Ovary (tissue), 10 donors: ENCODE measurements at regions of chr13 and their contacts with region 1.

Region 1: DNA sequence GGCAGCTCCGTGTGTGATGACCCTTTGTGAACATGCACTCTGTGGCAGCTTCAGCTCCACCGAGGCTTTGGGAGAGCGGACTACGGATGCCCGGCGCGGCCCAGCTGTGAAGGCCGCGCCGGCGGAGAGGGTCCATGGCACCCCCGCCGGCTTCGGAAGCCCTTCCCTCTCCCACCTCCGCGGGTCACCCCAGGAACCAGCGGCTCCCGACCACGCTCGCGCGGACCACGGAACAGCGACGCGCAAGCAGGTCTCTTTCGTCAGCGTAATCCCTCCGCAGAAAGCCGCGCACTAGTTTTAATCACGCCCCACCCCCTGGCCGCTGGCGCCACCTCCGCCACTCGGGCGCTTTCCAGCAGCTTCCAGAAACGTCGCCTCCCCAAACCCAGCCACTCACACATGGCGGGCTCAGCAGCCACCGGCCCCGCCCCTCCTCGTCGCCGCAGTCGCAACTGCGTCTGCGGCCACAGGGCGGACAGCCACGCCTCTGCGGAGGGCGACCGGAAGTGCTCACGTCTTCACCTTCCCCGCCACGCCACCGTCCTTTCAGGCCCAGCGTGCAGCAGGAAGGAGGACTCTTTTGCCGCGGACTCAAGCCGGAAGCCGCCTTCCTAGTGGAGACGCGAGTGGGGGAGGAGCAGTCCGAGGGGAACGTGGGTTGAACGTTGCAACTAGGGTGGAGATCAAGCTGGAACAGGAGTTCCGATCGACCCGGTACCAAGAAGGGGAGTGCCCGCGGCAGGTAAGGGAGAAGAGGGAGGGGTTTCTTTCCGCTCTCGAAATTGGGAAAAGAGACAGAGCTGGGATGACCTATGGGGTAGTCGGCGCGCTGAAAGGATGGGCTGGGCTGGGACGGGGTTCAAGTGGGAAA is at the start of gene USPL1:
- DNase-seq: peak; percentile 96 to 98 (median 98)
- H3K4me3 ChIP-seq: peak within 1 kb of the TSS; percentile 88
- H3K27ac ChIP-seq: peak within 1 kb of the TSS; percentile 99 to 100
- H3K4me1 ChIP-seq: peaks cover 2% of the 10 kb centered on the region
- H3K27me3 ChIP-seq: no peaks in the 10 kb centered on the region
- CTCF ChIP-seq: peak; percentile 34 to 90 (median 80)
- EP300 ChIP-seq: peak; percentile 84
- POLR2A ChIP-seq: peak; percentile 86
- total RNA-seq, gene USPL1: 19.4 to 26.8 (median 22.4) TPM

Region 2: GRCh38 chr13:30465585-30466357 is 151.8 kb before region 1 on chr13 and contains the start of gene HMGB1:
- intact Hi-C with region 1: loop called in 2 of 4 experiments (anchors 1 to 2 kb)
- DNase-seq: peak; percentile 97 to 98 (median 97)
- H3K4me3 ChIP-seq: peak within 1 kb of the TSS; percentile 93
- H3K27ac ChIP-seq: peak within 1 kb of the TSS; percentile 99 to 100
- H3K4me1 ChIP-seq: peaks cover 1% of the 10 kb centered on the region
- H3K27me3 ChIP-seq: no peaks in the 10 kb centered on the region
- CTCF ChIP-seq: no peak
- EP300 ChIP-seq: no peak
- POLR2A ChIP-seq: peak; percentile 98
- total RNA-seq, gene HMGB1: 163 to 283 (median 240) TPM

Region 3: GRCh38 chr13:30545320-30545719 is 72.2 kb before region 1 on chr13:
- intact Hi-C with region 1: no loop called
- DNase-seq: no peak
- H3K4me3 ChIP-seq: no peak overlapping the region
- H3K27ac ChIP-seq: no peak overlapping the region
- H3K4me1 ChIP-seq: no peaks in the 10 kb centered on the region
- H3K27me3 ChIP-seq: no peaks in the 10 kb centered on the region
- CTCF ChIP-seq: no peak
- EP300 ChIP-seq: no peak
- POLR2A ChIP-seq: no peak

Region 4: GRCh38 chr13:30659980-30660379 is 42.4 kb after region 1 on chr13:
- intact Hi-C with region 1: no loop called
- DNase-seq: no peak
- H3K4me3 ChIP-seq: no peak overlapping the region
- H3K27ac ChIP-seq: no peak overlapping the region
- H3K4me1 ChIP-seq: no peaks in the 10 kb centered on the region
- H3K27me3 ChIP-seq: no peaks in the 10 kb centered on the region
- CTCF ChIP-seq: no peak
- EP300 ChIP-seq: no peak
- POLR2A ChIP-seq: no peak

Region 5: DNA sequence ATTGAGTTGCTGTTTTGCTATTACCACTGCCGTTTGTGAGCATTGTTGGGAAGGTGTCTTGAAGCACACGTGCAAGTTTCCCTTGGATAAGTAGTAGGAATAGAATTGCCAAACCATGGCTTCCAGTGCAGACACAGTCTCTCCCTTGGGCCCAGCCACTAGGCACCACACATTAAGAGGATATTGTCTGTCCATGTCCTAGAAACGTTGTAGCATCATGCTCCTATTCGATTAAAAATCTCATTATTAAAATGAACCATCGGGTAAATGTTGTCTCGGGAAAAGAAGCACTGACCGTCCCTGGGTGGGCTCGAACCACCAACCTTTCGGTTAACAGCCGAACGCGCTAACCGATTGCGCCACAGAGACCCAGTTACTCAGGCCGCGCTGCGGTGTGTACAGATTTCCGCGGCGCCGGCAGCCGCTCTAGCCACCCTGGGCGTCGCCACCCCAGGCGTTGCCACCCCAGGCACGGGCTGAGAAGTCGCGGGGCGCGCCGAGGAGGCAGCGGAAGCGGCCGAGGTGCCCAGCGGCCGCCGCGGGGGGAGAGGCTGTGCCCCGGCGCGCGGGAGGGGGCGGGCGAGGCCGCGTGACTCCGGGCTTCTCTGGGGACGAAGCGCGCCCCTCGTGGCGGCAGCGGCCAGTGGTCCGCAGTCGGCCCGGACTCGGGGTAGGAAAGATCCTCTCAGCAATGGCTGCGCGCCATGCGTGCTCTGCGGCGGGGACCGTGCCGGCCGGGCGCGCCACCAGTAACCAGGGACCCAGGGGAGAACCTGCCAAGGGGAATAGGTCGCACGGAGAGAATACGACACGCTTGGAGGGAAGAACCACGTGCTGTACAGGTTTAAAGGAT is 56.3 kb after region 1 on chr13:
- intact Hi-C with region 1: loop called in 1 of 4 experiments (anchors 2 kb)
- DNase-seq: peak; percentile 82 to 90 (median 85)
- H3K4me3 ChIP-seq: peak overlapping the region; percentile 45
- H3K27ac ChIP-seq: peak overlapping the region; percentile 62 to 81
- H3K4me1 ChIP-seq: peaks cover 2% of the 10 kb centered on the region
- H3K27me3 ChIP-seq: no peaks in the 10 kb centered on the region
- CTCF ChIP-seq: peak; percentile 40 to 84 (median 77)
- EP300 ChIP-seq: no peak
- POLR2A ChIP-seq: no peak

Region 6: DNA sequence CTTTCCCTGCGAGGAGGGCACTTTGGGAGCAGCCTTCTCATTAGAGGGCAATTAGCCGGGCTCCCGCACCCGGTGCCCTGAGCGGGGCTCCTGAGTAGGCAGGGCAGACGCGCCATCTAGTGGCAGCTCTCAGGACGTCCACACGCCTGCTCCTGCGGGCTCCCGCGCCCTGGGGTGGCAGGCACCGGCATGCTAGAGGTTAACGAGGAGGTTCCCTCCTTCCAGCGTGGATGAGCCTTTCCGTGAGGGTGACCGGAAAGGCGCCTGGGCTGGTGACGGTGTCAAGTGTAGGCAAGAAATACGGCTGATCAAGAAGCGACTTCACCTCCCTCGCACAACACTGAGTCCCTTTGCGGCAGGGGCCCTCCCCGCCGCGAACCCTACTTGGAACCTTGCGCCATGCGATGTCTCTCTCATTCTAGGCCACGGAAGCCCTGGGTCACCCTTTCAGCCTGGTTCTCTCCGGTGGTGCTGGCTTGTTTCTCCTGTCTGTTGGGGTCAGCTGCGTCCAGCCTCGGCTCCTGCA is 185.5 kb after region 1 on chr13:
- intact Hi-C with region 1: loop called in 1 of 4 experiments (anchors 10 kb)
- DNase-seq: peak; percentile 84 to 91 (median 86)
- H3K4me3 ChIP-seq: peak overlapping the region; percentile 35
- H3K27ac ChIP-seq: no peak overlapping the region
- H3K4me1 ChIP-seq: peaks cover 4% of the 10 kb centered on the region
- H3K27me3 ChIP-seq: no peaks in the 10 kb centered on the region
- CTCF ChIP-seq: peak; percentile 84 to 92 (median 86)
- EP300 ChIP-seq: no peak
- POLR2A ChIP-seq: no peak